Dorsolateral prefrontal cortex (tissue), 120 donors: ENCODE measurements at regions of chr12 and their contacts with region 1.

Region 1: DNA sequence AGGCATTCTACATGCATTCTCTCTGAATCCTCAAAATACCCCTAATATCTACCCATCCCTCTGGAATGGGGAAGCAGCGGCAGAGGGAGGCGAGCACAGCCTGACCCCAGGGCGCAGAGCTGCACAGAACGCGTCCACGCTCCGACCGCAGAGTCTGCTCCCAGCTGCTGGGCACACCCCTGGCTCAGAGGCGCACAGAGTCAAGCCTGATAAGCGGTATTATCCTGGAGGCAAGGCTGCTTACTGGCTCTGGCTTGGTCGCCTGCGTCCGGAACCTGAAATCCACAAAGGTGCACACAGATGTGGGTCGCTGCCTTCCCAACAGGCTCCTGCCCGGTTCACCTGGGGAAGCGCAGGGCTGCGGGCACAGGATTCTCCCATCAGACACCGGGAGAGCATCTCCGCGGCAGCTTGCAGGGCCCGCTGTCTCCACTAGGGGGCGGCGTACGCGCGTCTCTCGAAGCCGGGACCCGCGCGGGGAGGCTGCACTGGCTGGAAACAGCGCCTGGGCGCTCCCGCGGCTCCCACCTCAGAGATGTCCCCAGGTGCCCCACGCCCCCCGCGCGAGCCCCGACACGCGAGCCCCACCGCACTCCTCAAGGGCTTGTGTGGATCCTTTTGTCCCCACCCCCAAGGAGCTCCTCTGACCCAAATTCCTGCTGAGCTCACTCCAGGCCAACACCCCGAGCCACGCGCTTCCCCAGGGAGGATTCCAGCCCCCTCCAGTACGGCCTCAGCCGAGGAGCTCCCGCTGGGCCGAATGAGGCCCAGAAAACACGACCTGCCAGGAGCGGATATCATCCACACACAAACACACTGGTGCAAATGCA is 120.1 kb upstream of the FZD10 start:
- DNase-seq: peak; percentile 74 to 88 (median 82)
- H3K4me3 ChIP-seq: peak overlapping the region in 57 of 59 donors; percentile 12 to 67 (median 48)
- H3K27ac ChIP-seq: peak overlapping the region in 1 of 59 donors; percentile 44
- H3K27me3 ChIP-seq: peaks cover 0 to 29% (median 0%) of the 10 kb centered on the region in 45 donors
- CTCF ChIP-seq: peak; percentile 66 to 98 (median 96)

Region 2: DNA sequence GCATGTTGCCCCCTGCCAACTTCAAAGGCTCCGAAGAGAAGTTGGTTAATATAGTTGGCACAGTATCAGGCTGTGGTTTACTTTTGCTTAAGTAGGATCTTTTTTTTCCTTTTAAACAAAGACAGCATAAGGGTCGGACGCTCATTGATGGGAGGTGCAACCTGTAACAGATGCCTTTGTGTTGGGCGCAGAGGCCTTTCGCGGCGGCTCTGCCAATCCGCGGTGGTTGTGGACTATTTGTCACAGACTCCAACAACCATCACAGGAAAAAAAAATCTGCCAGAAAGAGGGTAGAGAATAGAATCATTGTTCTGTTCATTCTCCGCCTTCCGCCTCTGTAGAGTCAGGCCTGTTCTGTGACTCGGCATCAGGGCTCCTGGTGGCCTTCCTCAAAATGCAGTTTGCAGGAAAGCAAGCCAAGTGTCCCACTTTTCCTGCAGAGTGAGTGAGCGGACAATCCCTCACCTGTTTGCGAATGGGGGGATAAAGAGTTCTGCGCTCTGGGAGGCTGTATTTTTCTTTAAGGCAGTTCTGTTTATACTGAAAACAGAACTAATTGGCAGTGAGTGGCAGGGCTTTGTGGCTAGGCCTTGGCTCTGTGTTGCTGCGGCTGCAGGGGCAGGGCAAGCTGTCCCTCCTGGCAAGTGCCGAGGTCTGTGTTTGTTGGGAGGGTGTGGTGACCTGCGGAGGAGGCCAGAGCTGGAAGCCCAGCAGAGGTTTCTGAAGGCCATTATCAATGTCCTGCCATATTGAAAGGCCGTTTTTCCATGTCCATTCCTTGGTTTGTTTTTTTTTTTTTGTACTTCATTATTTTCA is 212.5 kb after region 1 on chr12:
- intact Hi-C with region 1: loop called in 1 of 2 experiments (anchors 10 kb)
- DNase-seq: peak in 8 of 10 donors; percentile 21 to 71 (median 55)
- H3K4me3 ChIP-seq: peak overlapping the region in 18 of 59 donors; percentile 4 to 41 (median 12)
- H3K27ac ChIP-seq: peak overlapping the region in 58 of 59 donors; percentile 36 to 97 (median 85)
- H3K27me3 ChIP-seq: peaks cover 0 to 6% (median 0%) of the 10 kb centered on the region in 45 donors
- CTCF ChIP-seq: peak in 20 of 56 donors; percentile 7 to 43 (median 22)

Region 3: DNA sequence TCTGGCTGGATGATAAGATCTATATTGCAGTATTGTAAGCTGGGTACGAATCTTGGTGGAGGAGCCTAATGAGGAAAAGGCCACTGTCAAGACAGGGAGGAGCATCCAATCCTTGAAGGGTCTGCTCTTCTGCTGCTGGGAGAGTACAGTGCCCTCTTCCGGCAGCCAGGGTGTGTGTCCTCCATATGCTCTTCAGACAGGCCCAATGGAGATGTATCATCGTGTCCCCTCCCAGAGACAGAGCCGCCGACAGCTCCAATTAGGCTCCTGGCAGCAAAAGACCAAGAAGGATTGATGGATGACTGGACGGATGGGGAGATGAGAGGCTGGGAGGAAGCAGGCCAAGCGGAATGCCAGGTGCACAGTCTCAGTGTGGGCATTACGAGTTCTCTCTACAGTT is 243.8 kb after region 1 on chr12:
- intact Hi-C with region 1: loop called in 1 of 2 experiments (anchors 2 kb)
- DNase-seq: peak in 1 of 10 donors; percentile 9
- H3K4me3 ChIP-seq: no peak overlapping the region
- H3K27ac ChIP-seq: no peak overlapping the region
- H3K27me3 ChIP-seq: peaks cover 0 to 13% (median 0%) of the 10 kb centered on the region in 45 donors
- CTCF ChIP-seq: peak in 7 of 56 donors; percentile 9 to 51 (median 15)

Region 4: GRCh38 chr12:130335517-130336392 is 293.6 kb after region 1 on chr12:
- intact Hi-C with region 1: loop called (anchors 1 kb)
- DNase-seq: peak in 2 of 10 donors; percentile 57 to 60
- H3K4me3 ChIP-seq: no peak overlapping the region
- H3K27ac ChIP-seq: no peak overlapping the region
- H3K27me3 ChIP-seq: peaks cover 3 to 30% (median 17%) of the 10 kb centered on the region in 45 donors
- CTCF ChIP-seq: peak; percentile 66 to 98 (median 86)

Region 5: GRCh38 chr12:130747867-130748740 is 705.9 kb after region 1 on chr12:
- intact Hi-C with region 1: loop called in 1 of 2 experiments (anchors 5 kb)
- DNase-seq: peak; percentile 62 to 86 (median 81)
- H3K4me3 ChIP-seq: no peak overlapping the region
- H3K27ac ChIP-seq: peak overlapping the region in 2 of 59 donors; percentile 1 to 26
- H3K27me3 ChIP-seq: peaks cover 0 to 18% (median 0%) of the 10 kb centered on the region in 45 donors
- CTCF ChIP-seq: peak; percentile 71 to 94 (median 84)